ENCODE measurements at regions of chr9 and their contacts with region 1.

Region 1: GRCh38 chr9:121369595-121370265 is at the start of gene STOM:
- DNase-seq: peak in 4 of 10 donors; percentile 55 to 63 (median 60)
- H3K4me3 ChIP-seq: peak within 1 kb of the TSS; percentile 58 to 98 (median 87)
- H3K27ac ChIP-seq: peak within 1 kb of the TSS; percentile 63 to 97 (median 89)
- H3K27me3 ChIP-seq: no peaks in the 10 kb centered on the region
- CTCF ChIP-seq: no peak
- total RNA-seq, gene STOM: 58.0 to 261 (median 119) TPM

Region 2: GRCh38 chr9:121201738-121202533 is 167.8 kb before region 1 on chr9 and contains the start of gene RAB14:
- intact Hi-C with region 1: loop called in 1 of 2 experiments (anchors 5 kb)
- DNase-seq: peak; percentile 98 to 99 (median 99)
- H3K4me3 ChIP-seq: peak within 1 kb of the TSS; percentile 68 to 98 (median 88)
- H3K27ac ChIP-seq: peak within 1 kb of the TSS; percentile 47 to 98 (median 92)
- H3K27me3 ChIP-seq: no peaks in the 10 kb centered on the region
- CTCF ChIP-seq: peak; percentile 29 to 86 (median 68)
- total RNA-seq, gene RAB14: 57.6 to 139 (median 99.3) TPM

Region 3: GRCh38 chr9:121213136-121213806 is 156.5 kb before region 1 on chr9:
- intact Hi-C with region 1: loop called in 1 of 2 experiments (anchors 5 kb)
- DNase-seq: peak; percentile 82 to 96 (median 92)
- H3K4me3 ChIP-seq: peak overlapping the region in 9 of 59 donors; percentile 2 to 47 (median 14)
- H3K27ac ChIP-seq: peak overlapping the region in 42 of 59 donors; percentile 6 to 82 (median 58)
- H3K27me3 ChIP-seq: no peaks in the 10 kb centered on the region
- CTCF ChIP-seq: peak; percentile 86 to 100 (median 97)

Region 4: DNA sequence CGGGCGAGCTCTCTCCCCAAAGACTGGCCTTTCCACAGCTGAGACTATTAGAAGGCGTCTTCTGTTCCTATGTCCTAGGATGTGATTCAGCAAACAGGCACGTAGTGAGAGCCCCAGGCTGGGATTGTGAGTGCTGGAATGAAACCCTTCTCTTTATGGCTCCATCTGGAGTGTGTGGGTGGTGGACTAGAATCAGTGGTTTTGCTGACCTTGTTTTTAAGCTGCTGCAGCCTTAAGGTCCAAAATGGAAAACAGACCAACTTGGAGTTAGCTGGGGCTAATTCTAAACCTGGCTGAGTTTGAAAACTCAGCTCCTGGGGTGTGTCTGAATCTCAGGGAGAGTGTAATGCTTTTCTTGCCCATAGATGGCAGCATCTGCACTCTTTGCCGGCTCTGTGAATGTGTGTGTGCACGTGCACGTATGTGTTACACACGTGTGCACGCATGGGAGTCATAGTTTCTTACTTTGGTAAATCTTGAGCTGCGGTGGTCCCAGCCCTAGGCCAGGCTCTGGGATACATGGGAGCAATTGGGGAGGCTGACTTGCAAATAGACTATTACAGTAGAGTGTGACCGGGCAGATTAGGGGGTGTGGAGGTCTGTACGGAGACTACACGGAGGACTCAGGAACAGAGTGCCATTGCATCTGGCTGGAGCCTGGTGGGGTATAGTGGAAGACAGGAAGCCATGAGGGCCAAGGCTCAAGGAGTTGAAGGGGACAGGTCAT is 91.0 kb before region 1 on chr9:
- intact Hi-C with region 1: loop called in 1 of 2 experiments (anchors 5 kb)
- DNase-seq: peak in 4 of 10 donors; percentile 48 to 82 (median 66)
- H3K4me3 ChIP-seq: peak overlapping the region in 9 of 59 donors; percentile 2 to 24 (median 13)
- H3K27ac ChIP-seq: peak overlapping the region; percentile 51 to 100 (median 98)
- H3K27me3 ChIP-seq: no peaks in the 10 kb centered on the region
- CTCF ChIP-seq: peak; percentile 75 to 93 (median 87)

Region 5: DNA sequence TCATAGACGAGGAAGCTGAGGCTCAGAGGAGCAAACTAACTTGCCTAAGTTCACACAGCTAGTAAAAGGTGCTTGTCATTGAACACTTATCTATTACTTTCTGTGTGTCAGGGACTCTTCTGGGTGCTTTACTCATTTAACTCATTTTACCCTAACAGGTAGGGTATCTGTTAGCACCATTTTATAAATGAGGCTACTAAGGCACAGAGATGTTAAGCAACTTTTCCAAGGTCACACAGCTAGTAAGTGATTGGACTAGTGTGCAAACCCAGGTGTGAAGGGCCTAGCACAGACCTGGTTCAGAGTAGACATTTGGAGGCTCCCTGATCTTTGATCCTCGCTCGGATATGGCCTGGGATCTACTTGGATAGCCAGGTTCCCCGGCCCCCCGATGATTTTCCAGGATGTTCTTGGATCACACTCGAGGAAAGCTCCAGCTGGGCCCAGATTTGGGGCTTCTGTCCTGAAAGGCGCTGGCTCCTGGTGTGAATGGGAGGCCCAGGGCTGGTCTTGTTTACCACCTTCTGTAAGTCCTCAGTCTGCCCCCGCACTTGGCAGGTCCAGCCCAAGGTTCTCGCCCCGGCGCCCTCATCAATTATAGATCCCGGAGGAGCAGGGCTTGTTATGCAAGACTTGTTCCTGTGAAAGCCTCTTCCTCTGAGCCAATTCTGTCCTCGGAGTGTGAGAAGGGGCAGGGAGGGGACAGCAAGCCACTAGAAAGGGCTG is 64.3 kb before region 1 on chr9:
- intact Hi-C with region 1: no loop called
- DNase-seq: peak in 1 of 10 donors; percentile 39
- H3K4me3 ChIP-seq: no peak overlapping the region
- H3K27ac ChIP-seq: peak overlapping the region in 56 of 59 donors; percentile 3 to 99 (median 66)
- H3K27me3 ChIP-seq: no peaks in the 10 kb centered on the region
- CTCF ChIP-seq: no peak

Region 6: GRCh38 chr9:121321016-121321503 is 48.7 kb before region 1 on chr9:
- intact Hi-C with region 1: loop called in 1 of 2 experiments (anchors 2 kb)
- DNase-seq: no peak
- H3K4me3 ChIP-seq: no peak overlapping the region
- H3K27ac ChIP-seq: peak overlapping the region in 46 of 59 donors; percentile 1 to 92 (median 70)
- H3K27me3 ChIP-seq: no peaks in the 10 kb centered on the region
- CTCF ChIP-seq: no peak

Region 7: DNA sequence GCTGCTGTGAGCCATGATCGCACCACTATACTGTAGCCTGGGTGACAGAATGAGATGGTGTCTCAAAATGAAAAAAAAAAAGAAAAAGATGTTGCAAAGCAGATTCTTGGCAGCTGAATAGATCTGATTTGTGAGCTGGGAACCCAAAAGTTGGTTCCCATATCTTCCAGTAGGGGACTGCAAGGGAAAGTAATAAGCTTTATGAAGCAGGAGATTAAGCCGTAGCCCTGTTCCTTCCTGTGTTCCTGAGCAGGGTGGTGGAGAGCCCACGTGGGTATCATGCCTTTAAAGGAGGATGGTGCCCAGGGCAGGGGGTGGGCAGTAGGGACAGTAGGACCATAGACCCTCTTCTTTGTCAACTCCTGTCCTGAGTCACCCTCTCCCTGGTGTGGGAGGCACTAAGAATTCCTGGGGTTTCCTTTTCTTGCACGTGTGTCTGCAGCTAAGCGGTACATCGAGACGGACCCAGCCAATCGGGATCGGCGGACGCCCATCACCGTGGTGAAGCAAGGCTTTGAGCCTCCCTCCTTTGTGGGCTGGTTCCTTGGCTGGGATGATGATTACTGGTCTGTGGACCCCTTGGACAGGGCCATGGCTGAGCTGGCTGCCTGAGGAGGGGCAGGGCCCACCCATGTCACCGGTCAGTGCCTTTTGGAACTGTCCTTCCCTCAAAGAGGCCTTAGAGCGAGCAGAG is 37.6 kb before region 1 on chr9:
- intact Hi-C with region 1: loop called in 1 of 2 experiments (anchors 5 kb)
- DNase-seq: no peak
- H3K4me3 ChIP-seq: no peak overlapping the region
- H3K27ac ChIP-seq: peak overlapping the region in 48 of 59 donors; percentile 6 to 80 (median 50)
- H3K27me3 ChIP-seq: no peaks in the 10 kb centered on the region
- CTCF ChIP-seq: peak in 17 of 56 donors; percentile 7 to 39 (median 12)

Measured in dorsolateral prefrontal cortex (tissue), 120 donors.